A673 (cell line): ENCODE measurements at regions of chr14 and their contacts with region 1.

Region 1: GRCh38 chr14:81565441-81566290 is 32.0 kb upstream of the SEL1L start:
- DNase-seq: peak; percentile 59
- H3K4me3 ChIP-seq: no peak overlapping the region
- H3K27ac ChIP-seq: no peak overlapping the region
- H3K4me1 ChIP-seq: no peaks in the 10 kb centered on the region
- H3K27me3 ChIP-seq: no peaks in the 10 kb centered on the region
- CTCF ChIP-seq: peak; percentile 78

Region 2: DNA sequence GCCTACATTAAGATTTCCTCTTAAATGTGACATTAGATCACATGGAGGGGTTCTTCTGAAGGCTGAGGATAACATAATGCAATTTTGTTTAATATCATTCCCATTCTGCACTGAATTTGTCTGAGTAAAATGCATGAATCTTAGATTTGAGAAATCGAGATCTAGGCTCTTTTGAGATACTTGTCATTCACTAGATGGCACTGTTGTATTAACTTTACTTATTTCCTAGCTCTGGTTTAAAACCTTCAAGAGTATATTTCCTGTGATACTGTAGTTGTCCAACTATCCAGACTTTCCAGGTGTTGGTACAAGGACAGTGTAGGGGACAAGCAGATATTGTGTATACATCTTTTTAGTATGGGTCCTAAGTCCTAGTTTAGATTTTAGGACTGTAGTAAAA is 59.7 kb after region 1 on chr14:
- CTCF ChIA-PET with region 1: no interaction called
- POLR2A ChIA-PET with region 1: no interaction called
- intact Hi-C with region 1: no loop called
- DNase-seq: peak; percentile 49
- H3K4me3 ChIP-seq: no peak overlapping the region
- H3K27ac ChIP-seq: no peak overlapping the region
- H3K4me1 ChIP-seq: no peaks in the 10 kb centered on the region
- H3K27me3 ChIP-seq: no peaks in the 10 kb centered on the region
- CTCF ChIP-seq: peak; percentile 64

Region 3: GRCh38 chr14:81710234-81710845 is 144.7 kb after region 1 on chr14:
- CTCF ChIA-PET with region 1: no interaction called
- POLR2A ChIA-PET with region 1: no interaction called
- intact Hi-C with region 1: loop called (anchors 10 kb)
- DNase-seq: peak; percentile 61
- H3K4me3 ChIP-seq: no peak overlapping the region
- H3K27ac ChIP-seq: no peak overlapping the region
- H3K4me1 ChIP-seq: no peaks in the 10 kb centered on the region
- H3K27me3 ChIP-seq: no peaks in the 10 kb centered on the region
- CTCF ChIP-seq: peak; percentile 74

Region 4: DNA sequence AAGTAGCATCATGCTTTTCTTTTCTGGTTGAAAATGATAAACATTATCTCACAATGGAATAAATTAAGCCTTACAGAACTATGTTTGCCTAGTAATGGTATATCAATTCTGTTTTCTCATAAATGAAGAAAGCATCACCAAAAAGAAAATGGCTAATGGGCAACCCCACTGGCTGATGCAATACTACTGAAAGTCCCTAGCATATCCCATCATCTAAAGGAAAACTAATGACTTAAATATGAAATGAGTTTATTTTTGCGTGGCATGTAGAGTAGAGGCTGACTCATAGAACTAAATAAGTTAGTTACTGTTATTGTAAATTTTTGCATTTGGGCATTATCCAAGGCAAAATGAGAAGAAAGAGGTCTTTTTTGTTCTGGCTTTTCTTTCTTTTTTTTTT is 1124.3 kb after region 1 on chr14:
- CTCF ChIA-PET with region 1: no interaction called
- POLR2A ChIA-PET with region 1: no interaction called
- intact Hi-C with region 1: loop called (anchors 10 kb)
- DNase-seq: no peak
- H3K4me3 ChIP-seq: no peak overlapping the region
- H3K27ac ChIP-seq: no peak overlapping the region
- H3K4me1 ChIP-seq: no peaks in the 10 kb centered on the region
- H3K27me3 ChIP-seq: no peaks in the 10 kb centered on the region
- CTCF ChIP-seq: no peak